ENCODE measurements at regions of chr5 and their contacts with region 1.

Region 1: GRCh38 chr5:178130604-178131485 is at the start of gene RMND5B:
- DNase-seq: peak; percentile 78 to 82 (median 79)
- H3K4me3 ChIP-seq: peak within 1 kb of the TSS; percentile 69
- H3K4me3 Mint-ChIP-seq: peak within 1 kb of the TSS; percentile 84 to 93 (median 90)
- H3K27ac ChIP-seq: peak within 1 kb of the TSS; percentile 70
- H3K27ac Mint-ChIP-seq: peak within 1 kb of the TSS; percentile 70 to 96 (median 92)
- H3K4me1 ChIP-seq: peaks cover 8% of the 10 kb centered on the region
- H3K4me1 Mint-ChIP-seq: peaks cover 17 to 31% (median 24%) of the 10 kb centered on the region in 4 donors
- H3K27me3 ChIP-seq: no peaks in the 10 kb centered on the region
- H3K27me3 Mint-ChIP-seq: no peaks in the 10 kb centered on the region
- total RNA-seq, gene RMND5B: 38.6 to 39.0 TPM

Region 2: GRCh38 chr5:178113199-178113787 is 17.6 kb before region 1 on chr5 and contains the start of gene N4BP3:
- CTCF ChIA-PET with region 1: interaction called, 3 read pairs
- POLR2A ChIA-PET with region 1: interaction called, 6 read pairs
- intact Hi-C with region 1: loop called (anchors 1 kb)
- DNase-seq: peak; percentile 76 to 85 (median 78)
- H3K4me3 ChIP-seq: peak within 1 kb of the TSS; percentile 45 to 57
- H3K4me3 Mint-ChIP-seq: peak within 1 kb of the TSS; percentile 86 to 95 (median 90)
- H3K27ac ChIP-seq: peak within 1 kb of the TSS; percentile 32
- H3K27ac Mint-ChIP-seq: peak within 1 kb of the TSS; percentile 87 to 92 (median 89)
- H3K4me1 ChIP-seq: peaks cover 44% of the 10 kb centered on the region
- H3K4me1 Mint-ChIP-seq: peaks cover 20 to 50% (median 34%) of the 10 kb centered on the region in 4 donors
- H3K27me3 ChIP-seq: no peaks in the 10 kb centered on the region
- H3K27me3 Mint-ChIP-seq: peaks cover 0 to 2% of the 10 kb centered on the region in 2 donors
- total RNA-seq, gene N4BP3: 1.7 to 2.0 TPM

Region 3: DNA sequence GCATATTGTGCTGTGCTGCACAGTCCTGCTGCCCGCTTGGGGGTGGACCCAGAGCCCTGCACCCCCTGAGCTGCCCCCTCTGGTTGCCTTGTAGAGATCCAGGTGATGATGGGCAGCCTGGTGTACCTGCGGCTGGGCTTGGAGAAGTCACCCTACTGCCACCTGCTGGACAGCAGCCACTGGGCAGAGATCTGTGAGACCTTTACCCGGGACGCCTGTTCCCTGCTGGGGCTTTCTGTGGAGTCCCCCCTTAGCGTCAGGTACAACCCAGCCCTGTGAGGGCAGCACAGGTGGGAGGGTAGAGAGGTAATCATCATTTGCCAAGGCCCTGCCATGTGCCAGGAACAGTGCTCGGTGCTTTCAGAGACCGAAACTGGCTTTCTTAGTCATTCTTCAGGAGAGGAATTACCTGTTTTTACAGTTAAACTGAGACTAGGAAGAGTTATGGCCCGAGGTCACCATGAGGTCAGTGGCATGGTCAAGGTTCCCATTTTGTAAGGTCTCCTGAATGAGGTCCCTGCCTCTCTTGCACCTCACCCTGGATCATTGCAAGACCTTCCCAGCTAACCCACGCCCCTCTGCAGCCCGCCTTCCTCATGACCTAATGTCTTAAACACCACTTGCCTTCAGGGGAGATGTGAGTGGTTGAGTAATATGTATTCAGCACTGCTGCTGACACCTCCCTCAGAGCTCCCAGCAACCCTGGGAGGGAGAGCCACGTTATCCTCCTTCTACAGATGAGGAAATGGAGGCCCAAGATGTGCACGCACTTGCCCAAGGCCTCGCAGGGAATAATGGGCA is 15.4 kb after region 1 on chr5:
- CTCF ChIA-PET with region 1: interaction called, 12 read pairs
- POLR2A ChIA-PET with region 1: interaction called, 5 read pairs
- intact Hi-C with region 1: no loop called
- DNase-seq: peak; percentile 71 to 77 (median 74)
- H3K4me3 ChIP-seq: no peak overlapping the region
- H3K4me3 Mint-ChIP-seq: no peak overlapping the region
- H3K27ac ChIP-seq: no peak overlapping the region
- H3K27ac Mint-ChIP-seq: peak overlapping the region in 3 of 7 donors; percentile 41 to 46 (median 45)
- H3K4me1 ChIP-seq: peaks cover 12% of the 10 kb centered on the region
- H3K4me1 Mint-ChIP-seq: peaks cover 8 to 22% (median 10%) of the 10 kb centered on the region in 4 donors
- H3K27me3 ChIP-seq: no peaks in the 10 kb centered on the region
- H3K27me3 Mint-ChIP-seq: no peaks in the 10 kb centered on the region

Region 4: GRCh38 chr5:179166886-179167841 is 1036.3 kb after region 1 on chr5:
- CTCF ChIA-PET with region 1: no interaction called
- POLR2A ChIA-PET with region 1: no interaction called
- intact Hi-C with region 1: no loop called
- DNase-seq: peak in 4 of 5 donors; percentile 39 to 59 (median 47)
- H3K4me3 ChIP-seq: peak overlapping the region in 1 of 2 donors; percentile 5
- H3K4me3 Mint-ChIP-seq: peak overlapping the region in 7 of 8 donors; percentile 12 to 72 (median 38)
- H3K27ac ChIP-seq: no peak overlapping the region
- H3K27ac Mint-ChIP-seq: no peak overlapping the region
- H3K4me1 ChIP-seq: peaks cover 4% of the 10 kb centered on the region
- H3K4me1 Mint-ChIP-seq: peaks cover 0 to 8% (median 1%) of the 10 kb centered on the region in 4 donors
- H3K27me3 ChIP-seq: no peaks in the 10 kb centered on the region
- H3K27me3 Mint-ChIP-seq: peaks cover 8 to 10% of the 10 kb centered on the region in 2 donors